CD4-positive, alpha-beta T cell (primary cell): ENCODE measurements at regions of chr5 and their contacts with region 1.

Region 1: GRCh38 chr5:39547553-39548154 is 122.9 kb upstream of the DAB2 start:
- DNase-seq: peak in 4 of 14 experiments; percentile 21 to 65 (median 58)
- ATAC-seq: no peak
- H3K4me3 ChIP-seq: no peak overlapping the region
- H3K4me3 Mint-ChIP-seq: no peak overlapping the region
- H3K27ac ChIP-seq: no peak overlapping the region
- H3K27ac Mint-ChIP-seq: no peak overlapping the region
- H3K4me1 ChIP-seq: no peaks in the 10 kb centered on the region
- H3K4me1 Mint-ChIP-seq: peaks cover 7% of the 10 kb centered on the region
- H3K27me3 ChIP-seq: peaks cover 0 to 6% of the 10 kb centered on the region in 2 experiments
- H3K27me3 Mint-ChIP-seq: peaks cover 8% of the 10 kb centered on the region
- CTCF ChIP-seq: peak; percentile 84

Region 2: DNA sequence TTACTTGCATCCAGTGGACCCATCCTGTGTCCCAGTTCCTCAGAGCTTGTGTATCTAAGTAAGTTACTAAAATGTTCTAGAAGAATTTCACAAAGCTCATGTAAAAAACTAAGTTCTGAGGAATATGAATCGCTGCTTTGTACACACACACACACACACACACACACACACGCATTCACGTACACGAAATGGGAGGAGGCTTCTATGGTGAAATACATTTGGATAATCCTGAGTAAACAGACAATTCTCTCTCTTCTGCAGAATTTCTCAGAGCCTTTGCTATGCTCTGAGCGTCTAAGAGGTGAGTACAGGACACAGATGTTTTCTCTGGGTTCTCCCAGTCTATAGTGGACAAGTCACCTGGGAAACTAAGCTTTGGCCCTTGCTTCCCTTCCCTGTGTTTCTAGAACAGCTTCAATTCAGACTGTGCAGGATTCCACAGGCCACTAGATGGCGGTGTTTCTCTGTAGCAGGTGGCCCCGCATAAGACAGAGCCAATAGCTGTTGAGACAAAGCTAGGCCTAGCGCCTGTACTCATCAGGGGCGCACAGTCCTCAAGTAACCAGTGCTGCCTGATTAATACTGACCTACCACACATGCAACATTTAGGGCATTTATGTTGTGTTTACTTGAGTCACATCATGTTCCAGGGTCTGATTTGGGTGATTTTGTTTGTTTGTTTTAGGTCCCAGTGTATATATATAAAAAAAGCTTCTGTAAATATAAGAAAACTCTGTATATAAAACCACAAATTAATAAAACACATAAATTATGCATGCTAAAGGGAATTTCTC is 1106.0 kb before region 1 on chr5:
- CTCF ChIA-PET with region 1: interaction called, 6 read pairs
- POLR2A ChIA-PET with region 1: no interaction called
- intact Hi-C with region 1: loop called in 1 of 2 experiments (anchors 5 kb)
- DNase-seq: peak; percentile 63 to 87 (median 72)
- ATAC-seq: peak; percentile 99
- H3K4me3 ChIP-seq: no peak overlapping the region
- H3K4me3 Mint-ChIP-seq: no peak overlapping the region
- H3K27ac ChIP-seq: no peak overlapping the region
- H3K27ac Mint-ChIP-seq: no peak overlapping the region
- H3K4me1 ChIP-seq: no peaks in the 10 kb centered on the region
- H3K4me1 Mint-ChIP-seq: no peaks in the 10 kb centered on the region
- H3K27me3 ChIP-seq: peaks cover 19 to 25% of the 10 kb centered on the region in 2 experiments
- H3K27me3 Mint-ChIP-seq: peaks cover 59% of the 10 kb centered on the region
- CTCF ChIP-seq: peak; percentile 94

Region 3: DNA sequence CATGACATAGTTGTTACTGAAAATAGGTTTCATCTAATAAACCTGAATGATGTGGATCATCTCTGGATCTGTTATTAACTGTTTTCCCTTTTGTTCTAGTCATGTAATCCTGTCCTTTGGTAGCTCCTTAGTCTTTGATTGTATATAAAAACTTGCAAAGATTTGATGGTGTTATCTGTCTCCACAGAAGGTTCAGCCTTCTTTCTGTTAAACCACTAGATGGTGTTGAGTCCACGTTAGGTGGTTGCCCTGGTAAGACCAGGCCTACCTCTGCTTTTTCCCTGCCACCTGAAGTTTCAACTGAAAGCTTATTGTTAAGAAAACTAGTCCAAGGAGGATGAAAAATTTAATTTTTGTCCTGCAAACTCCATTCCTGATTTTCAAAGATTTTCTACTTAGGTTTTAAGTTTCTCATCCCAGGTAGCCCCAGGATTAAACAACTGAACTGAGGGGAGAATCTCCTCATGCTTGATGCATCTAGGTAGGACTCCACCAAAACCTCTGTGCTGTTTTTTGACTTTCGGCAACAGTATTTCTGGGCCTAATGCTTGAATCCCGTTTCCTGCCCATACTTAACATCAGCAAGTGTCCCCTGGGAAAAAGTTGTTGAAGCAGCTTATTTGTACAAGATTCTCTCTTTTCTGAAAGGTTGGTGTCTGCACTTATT is 542.0 kb before region 1 on chr5:
- CTCF ChIA-PET with region 1: interaction called, 4 read pairs
- POLR2A ChIA-PET with region 1: no interaction called
- intact Hi-C with region 1: loop called in 1 of 2 experiments (anchors 5 kb)
- DNase-seq: peak in 4 of 14 experiments; percentile 20 to 59 (median 48)
- ATAC-seq: peak; percentile 86
- H3K4me3 ChIP-seq: no peak overlapping the region
- H3K4me3 Mint-ChIP-seq: no peak overlapping the region
- H3K27ac ChIP-seq: no peak overlapping the region
- H3K27ac Mint-ChIP-seq: peak overlapping the region; percentile 64
- H3K4me1 ChIP-seq: peaks cover 4% of the 10 kb centered on the region
- H3K4me1 Mint-ChIP-seq: peaks cover 61% of the 10 kb centered on the region
- H3K27me3 ChIP-seq: no peaks in the 10 kb centered on the region
- H3K27me3 Mint-ChIP-seq: no peaks in the 10 kb centered on the region
- CTCF ChIP-seq: peak; percentile 64

Region 4: DNA sequence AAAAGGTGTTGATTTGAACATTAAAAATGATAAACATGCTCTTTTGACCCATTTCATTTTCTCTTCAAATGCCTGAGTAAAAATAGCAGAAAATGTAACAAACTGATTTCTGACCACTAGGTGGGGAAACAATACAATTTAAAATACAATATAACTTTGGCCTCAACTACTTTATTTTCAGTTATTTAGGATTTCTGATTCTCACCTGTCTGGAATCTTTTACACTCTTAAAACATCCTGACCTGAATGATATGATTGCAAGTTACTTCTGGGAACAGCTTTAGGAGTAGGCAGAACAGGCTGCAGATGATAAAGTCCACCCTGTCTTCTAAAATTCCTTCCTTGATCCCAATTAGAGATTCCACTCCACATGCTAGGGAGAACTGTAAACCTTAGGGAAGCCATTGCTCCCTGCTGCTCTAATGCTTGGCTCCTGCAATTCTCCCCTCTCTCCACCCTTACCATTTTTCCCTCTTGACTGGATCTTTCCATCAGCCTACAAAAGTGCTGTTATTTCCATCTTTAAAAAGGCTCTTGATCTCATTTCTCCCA is 398.6 kb before region 1 on chr5:
- CTCF ChIA-PET with region 1: no interaction called
- POLR2A ChIA-PET with region 1: no interaction called
- intact Hi-C with region 1: loop called (anchors 1 to 5 kb)
- DNase-seq: peak in 3 of 14 experiments; percentile 62 to 74 (median 70)
- ATAC-seq: peak; percentile 62
- H3K4me3 ChIP-seq: no peak overlapping the region
- H3K4me3 Mint-ChIP-seq: peak overlapping the region; percentile 0
- H3K27ac ChIP-seq: peak overlapping the region; percentile 58 to 61
- H3K27ac Mint-ChIP-seq: peak overlapping the region; percentile 86
- H3K4me1 ChIP-seq: peaks cover 51% of the 10 kb centered on the region
- H3K4me1 Mint-ChIP-seq: peaks cover 80% of the 10 kb centered on the region
- H3K27me3 ChIP-seq: no peaks in the 10 kb centered on the region
- H3K27me3 Mint-ChIP-seq: no peaks in the 10 kb centered on the region
- CTCF ChIP-seq: peak; percentile 66

Region 5: GRCh38 chr5:39376293-39376714 is 171.3 kb before region 1 on chr5:
- CTCF ChIA-PET with region 1: interaction called, 6 read pairs
- POLR2A ChIA-PET with region 1: no interaction called
- intact Hi-C with region 1: loop called in 1 of 2 experiments (anchors 2 kb)
- DNase-seq: peak in 8 of 14 experiments; percentile 1 to 62 (median 18)
- ATAC-seq: peak; percentile 51
- H3K4me3 ChIP-seq: no peak overlapping the region
- H3K4me3 Mint-ChIP-seq: no peak overlapping the region
- H3K27ac ChIP-seq: no peak overlapping the region
- H3K27ac Mint-ChIP-seq: no peak overlapping the region
- H3K4me1 ChIP-seq: no peaks in the 10 kb centered on the region
- H3K4me1 Mint-ChIP-seq: no peaks in the 10 kb centered on the region
- H3K27me3 ChIP-seq: no peaks in the 10 kb centered on the region
- H3K27me3 Mint-ChIP-seq: peaks cover 13% of the 10 kb centered on the region
- CTCF ChIP-seq: peak; percentile 69

Region 6: GRCh38 chr5:39755986-39756385 is 208.3 kb after region 1 on chr5:
- CTCF ChIA-PET with region 1: no interaction called
- POLR2A ChIA-PET with region 1: no interaction called
- intact Hi-C with region 1: no loop called
- DNase-seq: no peak
- ATAC-seq: no peak
- H3K4me3 ChIP-seq: no peak overlapping the region
- H3K4me3 Mint-ChIP-seq: no peak overlapping the region
- H3K27ac ChIP-seq: no peak overlapping the region
- H3K27ac Mint-ChIP-seq: no peak overlapping the region
- H3K4me1 ChIP-seq: no peaks in the 10 kb centered on the region
- H3K4me1 Mint-ChIP-seq: no peaks in the 10 kb centered on the region
- H3K27me3 ChIP-seq: no peaks in the 10 kb centered on the region
- H3K27me3 Mint-ChIP-seq: no peaks in the 10 kb centered on the region
- CTCF ChIP-seq: no peak